MCF 10A (cell line): ENCODE measurements at regions of chr10 and their contacts with region 1.

Region 1: GRCh38 chr10:72319416-72320254 is 35.1 kb downstream of the DNAJB12 start:
- DNase-seq: peak; percentile 96
- H3K4me3 Mint-ChIP-seq: peak overlapping the region; percentile 56
- H3K27ac Mint-ChIP-seq: peak overlapping the region; percentile 95
- H3K4me1 Mint-ChIP-seq: peaks cover 47% of the 10 kb centered on the region
- H3K27me3 Mint-ChIP-seq: no peaks in the 10 kb centered on the region
- CTCF ChIP-seq: no peak

Region 2: GRCh38 chr10:72215652-72216549 is 103.7 kb before region 1 on chr10 and contains the starts of genes ANAPC16 and ASCC1:
- CTCF ChIA-PET with region 1: no interaction called
- POLR2A ChIA-PET with region 1: interaction called, 28 read pairs
- intact Hi-C with region 1: no loop called
- DNase-seq: peak; percentile 89
- H3K4me3 Mint-ChIP-seq: peak within 1 kb of the TSS; percentile 100
- H3K27ac Mint-ChIP-seq: peak within 1 kb of the TSS; percentile 92
- H3K4me1 Mint-ChIP-seq: peaks cover 6% of the 10 kb centered on the region
- H3K27me3 Mint-ChIP-seq: no peaks in the 10 kb centered on the region
- CTCF ChIP-seq: no peak
- total RNA-seq, gene ANAPC16: 97.0 and 110 TPM in 2 replicates
- total RNA-seq, gene ASCC1: 26.3 and 31.6 TPM in 2 replicates

Region 3: GRCh38 chr10:72248468-72249151 is 71.0 kb before region 1 on chr10:
- CTCF ChIA-PET with region 1: interaction called, 7 read pairs
- POLR2A ChIA-PET with region 1: interaction called, 51 read pairs
- intact Hi-C with region 1: loop called (anchors 2 kb)
- DNase-seq: peak; percentile 96
- H3K4me3 Mint-ChIP-seq: peak overlapping the region; percentile 49
- H3K27ac Mint-ChIP-seq: peak overlapping the region; percentile 88
- H3K4me1 Mint-ChIP-seq: peaks cover 59% of the 10 kb centered on the region
- H3K27me3 Mint-ChIP-seq: no peaks in the 10 kb centered on the region
- CTCF ChIP-seq: no peak

Region 4: DNA sequence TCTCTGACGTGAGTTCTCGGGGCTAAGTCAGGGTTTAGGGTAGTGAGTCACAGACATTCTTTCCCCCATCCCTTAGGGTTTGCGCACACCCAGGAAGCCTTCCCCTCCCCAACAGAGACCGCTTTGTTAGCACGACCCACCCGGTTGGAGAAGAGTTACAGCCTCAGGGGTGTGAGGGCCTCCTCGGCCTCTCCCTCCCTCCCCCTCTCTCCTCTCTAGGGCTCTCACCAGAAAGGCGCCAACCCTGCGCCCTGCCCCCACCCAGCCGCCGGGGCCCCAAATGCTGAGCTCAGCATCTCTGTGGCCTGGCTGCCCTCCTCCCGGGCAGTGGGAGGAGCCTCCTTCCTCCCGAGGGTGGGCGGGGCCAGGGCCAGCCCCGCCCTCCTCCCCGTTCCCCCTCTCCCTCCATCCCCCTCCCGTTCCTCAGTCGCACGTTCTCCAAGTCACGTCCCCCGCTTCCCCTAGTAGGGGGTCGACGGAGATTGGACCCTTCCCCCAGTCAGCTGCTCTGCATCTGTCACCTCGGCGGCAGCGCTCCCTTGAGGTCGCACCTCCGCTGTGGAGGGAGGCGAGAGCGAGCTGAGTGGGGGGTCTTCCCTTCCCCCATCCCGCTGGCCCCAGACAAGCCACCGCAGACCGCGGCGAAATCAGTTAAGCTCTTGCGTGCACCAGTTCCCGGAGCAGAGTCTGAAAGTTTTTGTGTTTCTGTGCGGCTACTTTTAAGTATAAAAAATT is 58.9 kb before region 1 on chr10:
- CTCF ChIA-PET with region 1: interaction called, 3 read pairs
- POLR2A ChIA-PET with region 1: interaction called, 47 read pairs
- intact Hi-C with region 1: no loop called
- DNase-seq: peak; percentile 99
- H3K4me3 Mint-ChIP-seq: peak overlapping the region; percentile 53
- H3K27ac Mint-ChIP-seq: peak overlapping the region; percentile 87
- H3K4me1 Mint-ChIP-seq: peaks cover 46% of the 10 kb centered on the region
- H3K27me3 Mint-ChIP-seq: no peaks in the 10 kb centered on the region
- CTCF ChIP-seq: no peak

Region 5: DNA sequence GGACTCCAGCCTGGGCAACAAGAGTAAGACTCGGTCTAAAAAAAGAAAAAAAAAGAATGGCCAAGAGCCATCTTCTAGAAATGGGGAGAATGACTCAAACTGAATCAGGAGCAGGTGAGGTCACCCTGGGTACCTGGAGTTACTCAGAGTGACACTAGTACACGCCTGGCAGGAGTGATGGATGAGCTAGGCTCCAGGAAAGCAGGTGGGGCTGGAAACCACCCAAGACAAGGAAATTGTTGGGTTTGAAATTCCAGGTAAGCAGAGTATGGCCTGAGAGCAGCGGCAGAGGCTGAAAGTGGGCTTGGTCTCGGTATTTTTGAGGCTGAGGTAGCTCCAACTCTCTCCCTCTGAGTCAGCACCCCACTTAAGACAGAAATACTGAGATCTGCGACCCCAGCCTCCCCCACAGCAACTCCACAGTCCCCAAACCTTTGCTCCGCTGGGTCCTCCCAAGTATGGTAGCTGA is 27.4 kb before region 1 on chr10:
- CTCF ChIA-PET with region 1: interaction called, 6 read pairs
- POLR2A ChIA-PET with region 1: interaction called, 37 read pairs
- intact Hi-C with region 1: loop called (anchors 2 kb)
- DNase-seq: peak; percentile 96
- H3K4me3 Mint-ChIP-seq: no peak overlapping the region
- H3K27ac Mint-ChIP-seq: peak overlapping the region; percentile 57
- H3K4me1 Mint-ChIP-seq: peaks cover 18% of the 10 kb centered on the region
- H3K27me3 Mint-ChIP-seq: no peaks in the 10 kb centered on the region
- CTCF ChIP-seq: no peak

Region 6: GRCh38 chr10:72308320-72308987 is 11.2 kb before region 1 on chr10:
- CTCF ChIA-PET with region 1: no interaction called
- POLR2A ChIA-PET with region 1: interaction called, 14 read pairs
- intact Hi-C with region 1: no loop called
- DNase-seq: peak; percentile 87
- H3K4me3 Mint-ChIP-seq: no peak overlapping the region
- H3K27ac Mint-ChIP-seq: peak overlapping the region; percentile 84
- H3K4me1 Mint-ChIP-seq: peaks cover 33% of the 10 kb centered on the region
- H3K27me3 Mint-ChIP-seq: no peaks in the 10 kb centered on the region
- CTCF ChIP-seq: no peak